ENCODE measurements at regions of chr14 and their contacts with region 1.

Region 1: DNA sequence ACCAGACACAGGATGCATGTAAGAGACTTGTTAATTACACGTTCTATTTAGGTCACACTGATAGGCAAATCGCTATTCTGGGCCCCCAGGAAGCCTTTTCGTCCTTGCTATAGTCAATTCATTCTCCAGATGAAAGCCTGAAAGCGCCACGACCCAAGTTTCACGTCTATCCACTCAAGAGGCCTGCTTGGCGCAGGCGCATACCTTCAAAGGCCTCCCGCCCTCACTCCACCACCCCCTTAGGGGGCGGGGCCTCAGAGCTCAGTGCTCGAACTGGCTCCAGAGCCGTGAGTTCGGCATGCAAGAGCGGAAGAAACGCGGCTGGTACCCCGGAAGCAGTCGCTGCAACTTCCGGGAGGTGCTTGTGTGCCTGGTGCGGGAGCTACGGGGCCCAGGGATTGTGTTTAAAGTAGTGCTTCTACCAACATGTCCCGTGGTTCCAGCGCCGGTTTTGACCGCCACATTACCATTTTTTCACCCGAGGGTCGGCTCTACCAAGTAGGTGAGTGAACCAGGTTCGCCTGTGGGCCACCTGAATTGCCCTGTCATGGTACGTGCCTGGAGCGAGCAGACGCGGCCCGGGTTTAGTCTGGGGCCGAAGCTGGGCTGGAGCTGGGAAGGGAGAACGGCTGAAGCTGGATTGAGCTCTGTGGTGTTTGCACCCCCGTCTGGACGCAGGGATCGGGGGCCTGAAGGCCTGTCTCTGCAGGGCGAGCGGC is at the start of gene PSMA6:
- DNase-seq: peak; percentile 100
- ATAC-seq: peak; percentile 92
- H3K4me3 ChIP-seq: peak within 1 kb of the TSS; percentile 78 to 90 (median 86)
- H3K27ac ChIP-seq: peak within 1 kb of the TSS; percentile 96
- H3K4me1 ChIP-seq: peaks cover 54% of the 10 kb centered on the region
- H3K27me3 ChIP-seq: no peaks in the 10 kb centered on the region; a peak in 2 of 5 replicates
- CTCF ChIP-seq: peak; percentile 25; the same call in 1 of the 2 replicates
- EP300 ChIP-seq: peak; percentile 72 to 77; a peak in 3 of 4 replicates
- POLR2A ChIP-seq: peak; percentile 94 to 98
- RAD21 ChIP-seq: peak; percentile 54
- total RNA-seq, gene PSMA6: 1,109 and 1,579 TPM in 2 replicates

Region 2: GRCh38 chr14:35121887-35122695 is 170.1 kb before region 1 on chr14 and contains the starts of genes PPP2R3C and PRORP:
- CTCF ChIA-PET with region 1: no interaction called
- POLR2A ChIA-PET with region 1: interaction called, 48 read pairs
- in situ Hi-C with region 1: no loop called
- intact Hi-C with region 1: loop called (anchors 1 kb)
- DNase-seq: peak; percentile 98
- ATAC-seq: peak; percentile 94
- H3K4me3 ChIP-seq: peak within 1 kb of the TSS; percentile 82 to 97 (median 86)
- H3K27ac ChIP-seq: peak within 1 kb of the TSS; percentile 91
- H3K4me1 ChIP-seq: peaks cover 67% of the 10 kb centered on the region
- H3K27me3 ChIP-seq: peaks cover 0 to 5% of the 10 kb centered on the region in 2 experiments; a peak in 2 of 5 replicates
- CTCF ChIP-seq: peak; percentile 37
- EP300 ChIP-seq: peak; percentile 47 to 82
- POLR2A ChIP-seq: peak; percentile 90 to 96
- RAD21 ChIP-seq: no peak
- total RNA-seq, gene PPP2R3C: 102 and 140 TPM in 2 replicates
- total RNA-seq, gene PRORP: 88.7 and 131 TPM in 2 replicates

Region 3: GRCh38 chr14:35159742-35160409 is 132.3 kb before region 1 on chr14:
- CTCF ChIA-PET with region 1: no interaction called
- POLR2A ChIA-PET with region 1: interaction called, 9 read pairs
- in situ Hi-C with region 1: no loop called
- intact Hi-C with region 1: loop called (anchors 5 kb)
- DNase-seq: peak; percentile 94
- ATAC-seq: peak; percentile 90
- H3K4me3 ChIP-seq: peak overlapping the region in 1 of 3 experiments; percentile 4; a peak in 1 of 6 replicates
- H3K27ac ChIP-seq: peak overlapping the region; percentile 20
- H3K4me1 ChIP-seq: peaks cover 26% of the 10 kb centered on the region
- H3K27me3 ChIP-seq: no peaks in the 10 kb centered on the region
- CTCF ChIP-seq: no peak
- EP300 ChIP-seq: peak in 1 of 2 experiments; percentile 74; a peak in 2 of 4 replicates
- POLR2A ChIP-seq: no peak
- RAD21 ChIP-seq: no peak

Region 4: GRCh38 chr14:35331605-35332516 is 39.7 kb after region 1 on chr14:
- CTCF ChIA-PET with region 1: no interaction called
- POLR2A ChIA-PET with region 1: interaction called, 81 read pairs
- in situ Hi-C with region 1: no loop called
- intact Hi-C with region 1: loop called (anchors 2 kb)
- DNase-seq: peak; percentile 75
- ATAC-seq: peak; percentile 31
- H3K4me3 ChIP-seq: peak overlapping the region; percentile 32 to 62 (median 41)
- H3K27ac ChIP-seq: no peak overlapping the region
- H3K4me1 ChIP-seq: peaks cover 67% of the 10 kb centered on the region
- H3K27me3 ChIP-seq: no peaks in the 10 kb centered on the region
- CTCF ChIP-seq: peak; percentile 11; the same call in 1 of the 2 replicates
- EP300 ChIP-seq: no peak
- POLR2A ChIP-seq: no peak
- RAD21 ChIP-seq: peak; percentile 39; the same call in 1 of the 2 replicates

Region 5: GRCh38 chr14:35355981-35356841 is 64.0 kb after region 1 on chr14:
- CTCF ChIA-PET with region 1: no interaction called
- POLR2A ChIA-PET with region 1: interaction called, 13 read pairs
- in situ Hi-C with region 1: no loop called
- intact Hi-C with region 1: no loop called
- DNase-seq: peak; percentile 91
- ATAC-seq: peak; percentile 81
- H3K4me3 ChIP-seq: peak overlapping the region; percentile 9 to 27 (median 12); a peak in 5 of 6 replicates
- H3K27ac ChIP-seq: peak overlapping the region; percentile 41
- H3K4me1 ChIP-seq: peaks cover 58% of the 10 kb centered on the region
- H3K27me3 ChIP-seq: no peaks in the 10 kb centered on the region
- CTCF ChIP-seq: no peak
- EP300 ChIP-seq: peak; percentile 8 to 82; a peak in 3 of 4 replicates
- POLR2A ChIP-seq: 0 out of 4 replicates have a peak, but pooled peaks of 1 of the 2 experiments have one; percentile 25
- RAD21 ChIP-seq: 0 out of 2 replicates have a peak, but pooled peaks have one; percentile 13

Region 6: DNA sequence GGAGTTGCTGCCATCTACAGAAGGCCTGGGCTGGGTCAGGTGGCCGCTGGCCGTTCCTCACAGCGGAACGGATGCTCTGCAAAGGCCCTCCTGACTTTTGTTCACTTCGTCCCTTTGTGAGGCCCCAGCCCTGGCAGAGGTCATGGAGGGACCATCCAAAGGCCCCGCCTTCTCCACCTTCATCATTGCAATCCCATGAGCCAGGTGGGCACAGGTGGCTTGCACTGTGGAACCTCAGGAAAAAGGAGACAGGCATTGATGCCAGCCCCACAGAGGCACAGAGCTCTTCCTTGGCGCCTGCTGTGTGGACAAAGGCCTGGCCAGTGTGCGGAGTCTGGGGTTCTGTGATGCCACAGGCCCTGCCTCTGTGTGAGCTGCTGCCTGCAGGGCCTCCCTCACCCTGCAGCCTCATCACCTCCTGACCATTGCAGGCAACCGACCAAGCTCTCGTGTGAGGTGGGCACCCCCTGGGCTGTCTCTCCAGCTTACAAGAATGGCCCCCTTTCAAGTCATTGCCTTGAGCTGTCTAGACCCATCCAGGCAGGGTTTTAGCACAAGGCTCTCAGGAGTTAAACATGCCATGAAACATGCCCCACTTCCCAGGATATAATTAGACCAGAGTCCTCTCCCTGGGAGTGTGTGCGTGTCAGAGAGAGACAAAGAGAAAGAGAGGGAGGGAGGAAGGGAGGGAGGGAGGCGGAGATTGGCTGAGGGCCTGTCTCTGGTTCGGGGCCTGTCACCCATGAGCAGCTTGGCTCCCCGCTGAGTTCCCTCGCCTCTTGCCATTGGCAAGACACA is 93.0 kb after region 1 on chr14:
- CTCF ChIA-PET with region 1: no interaction called
- POLR2A ChIA-PET with region 1: interaction called, 29 read pairs
- in situ Hi-C with region 1: no loop called
- intact Hi-C with region 1: loop called (anchors 5 kb)
- DNase-seq: peak; percentile 85
- ATAC-seq: peak; percentile 83
- H3K4me3 ChIP-seq: peak overlapping the region; percentile 41 to 73 (median 44)
- H3K27ac ChIP-seq: peak overlapping the region; percentile 29
- H3K4me1 ChIP-seq: peaks cover 52% of the 10 kb centered on the region
- H3K27me3 ChIP-seq: no peaks in the 10 kb centered on the region
- CTCF ChIP-seq: peak; percentile 10; the same call in 1 of the 2 replicates
- EP300 ChIP-seq: peak; percentile 17 to 30; a peak in 2 of 4 replicates
- POLR2A ChIP-seq: peak in 1 of 2 experiments; percentile 59; a peak in 2 of 4 replicates
- RAD21 ChIP-seq: no peak